ENCODE measurements at regions of chr3 and their contacts with region 1.

Region 1: DNA sequence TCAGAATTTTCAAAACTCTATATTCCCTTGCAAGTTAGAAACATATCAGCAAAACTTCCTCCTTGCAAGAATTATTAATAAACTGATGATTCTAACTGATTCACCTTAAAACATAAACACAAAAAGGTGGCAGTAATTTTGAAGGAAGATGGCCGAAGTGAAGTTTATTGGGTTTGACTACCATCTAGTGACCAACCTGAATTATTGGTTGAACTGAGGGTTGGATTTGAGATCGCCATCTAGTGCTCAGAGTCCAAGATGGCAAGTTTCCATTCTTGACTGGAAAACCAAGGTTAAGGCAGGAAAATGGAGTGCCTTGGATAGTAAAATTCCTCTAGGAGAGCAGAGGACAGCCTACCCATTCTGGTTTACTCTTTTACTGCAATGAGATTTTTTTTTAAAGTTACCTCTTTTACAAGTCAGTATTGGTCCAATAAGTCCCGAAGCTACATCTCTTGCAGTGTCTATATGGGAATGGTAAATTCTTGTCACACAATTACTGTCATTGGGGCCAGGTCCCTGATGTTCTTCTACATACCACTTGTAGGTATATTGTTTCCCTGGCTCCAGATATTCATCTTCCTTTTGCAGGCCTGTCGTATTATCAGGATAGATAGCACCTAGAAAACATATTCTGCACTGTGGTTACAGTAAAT is 51.6 kb upstream of the CP start:
- DNase-seq: peak; percentile 91
- ATAC-seq: peak; percentile 83
- H3K4me3 ChIP-seq: no peak overlapping the region
- H3K27ac ChIP-seq: no peak overlapping the region
- H3K4me1 ChIP-seq: peaks cover 2% of the 10 kb centered on the region; the same call in 1 of the 2 replicates
- H3K27me3 ChIP-seq: no peaks in the 10 kb centered on the region
- CTCF ChIP-seq: peak; percentile 100; the same call in 1 of the 2 replicates
- POLR2A ChIP-seq: peak; percentile 52; the same call in 1 of the 2 replicates
- RAD21 ChIP-seq: peak; percentile 98

Region 2: GRCh38 chr3:148962513-148962912 is 310.7 kb before region 1 on chr3:
- CTCF ChIA-PET with region 1: interaction called, 6 read pairs
- POLR2A ChIA-PET with region 1: no interaction called
- dilution Hi-C with region 1: no loop called
- in situ Hi-C with region 1: loop called (anchors 5 kb)
- intact Hi-C with region 1: loop called (anchors 2 kb)
- DNase-seq: peak; percentile 88
- ATAC-seq: peak; percentile 99
- H3K4me3 ChIP-seq: no peak overlapping the region
- H3K27ac ChIP-seq: no peak overlapping the region
- H3K4me1 ChIP-seq: no peaks in the 10 kb centered on the region
- H3K27me3 ChIP-seq: no peaks in the 10 kb centered on the region
- CTCF ChIP-seq: peak; percentile 54
- POLR2A ChIP-seq: no peak
- RAD21 ChIP-seq: peak; percentile 63

Region 3: DNA sequence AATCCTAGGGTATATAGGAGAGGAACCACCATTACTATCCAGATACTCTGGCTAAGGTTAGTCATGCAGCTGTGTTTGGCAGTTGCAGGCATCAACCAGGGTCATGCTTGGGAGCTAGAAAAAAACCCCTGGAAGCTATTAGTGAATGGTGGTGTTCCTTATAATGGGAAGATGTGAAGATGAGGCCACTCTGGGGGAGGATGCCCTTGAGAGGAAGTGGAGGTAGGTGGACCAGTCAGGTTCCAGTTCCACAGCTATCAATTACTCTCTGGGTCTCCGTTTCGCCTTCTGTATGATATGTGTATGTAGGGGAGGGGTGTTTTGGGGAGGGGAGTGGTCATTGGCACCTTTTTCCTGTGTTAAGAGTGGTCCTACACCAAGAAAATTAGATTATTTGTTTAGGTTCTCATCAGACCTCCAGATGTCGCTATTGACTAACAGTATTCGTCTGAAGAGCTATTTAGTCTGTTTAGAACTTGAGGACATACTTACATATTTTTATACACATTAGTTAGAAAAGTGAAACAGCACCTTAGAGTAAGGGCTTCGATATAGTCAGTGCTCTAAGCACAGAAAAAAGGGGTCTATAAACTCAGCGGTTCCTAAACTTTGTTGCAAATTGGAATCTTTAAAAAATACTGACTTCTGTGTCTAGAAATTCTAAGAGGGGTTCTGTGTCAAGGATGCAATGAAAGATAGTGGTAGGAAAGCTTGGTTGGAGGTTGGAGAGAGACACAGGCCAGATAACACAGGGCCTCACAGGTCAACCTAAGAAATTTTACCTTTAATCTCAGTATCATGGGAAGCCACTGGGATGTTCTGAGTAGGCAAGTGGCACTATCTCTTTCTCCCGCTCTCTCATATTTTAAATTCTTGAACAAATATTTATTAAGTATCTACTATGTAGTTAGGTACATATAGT is 152.9 kb before region 1 on chr3:
- CTCF ChIA-PET with region 1: interaction called, 6 read pairs
- POLR2A ChIA-PET with region 1: no interaction called
- dilution Hi-C with region 1: no loop called
- in situ Hi-C with region 1: loop called (anchors 5 kb)
- intact Hi-C with region 1: loop called (anchors 1 kb)
- DNase-seq: peak; percentile 76
- ATAC-seq: peak; percentile 85
- H3K4me3 ChIP-seq: no peak overlapping the region
- H3K27ac ChIP-seq: no peak overlapping the region
- H3K4me1 ChIP-seq: no peaks in the 10 kb centered on the region
- H3K27me3 ChIP-seq: no peaks in the 10 kb centered on the region
- CTCF ChIP-seq: peak; percentile 79
- POLR2A ChIP-seq: no peak
- RAD21 ChIP-seq: peak; percentile 86

Region 4: DNA sequence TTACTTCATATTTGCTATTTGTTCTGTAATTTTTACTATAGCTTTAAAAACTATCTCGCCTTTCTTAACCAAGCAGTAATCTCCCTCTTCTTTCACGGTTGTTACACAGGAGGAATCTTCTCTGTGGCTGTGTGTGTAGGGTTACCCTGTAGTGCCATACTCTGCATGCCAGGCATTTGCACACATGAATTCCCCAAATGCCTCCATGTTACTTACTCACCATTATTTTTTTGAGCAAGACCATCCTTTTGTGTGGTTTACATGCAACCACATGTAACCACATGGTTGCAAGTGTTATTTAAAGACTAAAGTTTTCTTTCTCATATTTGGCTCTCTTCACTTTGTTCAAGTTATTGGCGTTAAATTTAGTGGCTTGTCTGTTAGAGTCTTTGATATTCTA is 98.3 kb before region 1 on chr3:
- CTCF ChIA-PET with region 1: no interaction called
- POLR2A ChIA-PET with region 1: no interaction called
- dilution Hi-C with region 1: no loop called
- in situ Hi-C with region 1: no loop called
- intact Hi-C with region 1: loop called (anchors 2 kb)
- DNase-seq: no peak
- ATAC-seq: no peak
- H3K4me3 ChIP-seq: no peak overlapping the region
- H3K27ac ChIP-seq: no peak overlapping the region
- H3K4me1 ChIP-seq: peaks cover 11% of the 10 kb centered on the region; the same call in 1 of the 2 replicates
- H3K27me3 ChIP-seq: no peaks in the 10 kb centered on the region
- CTCF ChIP-seq: no peak
- POLR2A ChIP-seq: no peak
- RAD21 ChIP-seq: no peak

Region 5: DNA sequence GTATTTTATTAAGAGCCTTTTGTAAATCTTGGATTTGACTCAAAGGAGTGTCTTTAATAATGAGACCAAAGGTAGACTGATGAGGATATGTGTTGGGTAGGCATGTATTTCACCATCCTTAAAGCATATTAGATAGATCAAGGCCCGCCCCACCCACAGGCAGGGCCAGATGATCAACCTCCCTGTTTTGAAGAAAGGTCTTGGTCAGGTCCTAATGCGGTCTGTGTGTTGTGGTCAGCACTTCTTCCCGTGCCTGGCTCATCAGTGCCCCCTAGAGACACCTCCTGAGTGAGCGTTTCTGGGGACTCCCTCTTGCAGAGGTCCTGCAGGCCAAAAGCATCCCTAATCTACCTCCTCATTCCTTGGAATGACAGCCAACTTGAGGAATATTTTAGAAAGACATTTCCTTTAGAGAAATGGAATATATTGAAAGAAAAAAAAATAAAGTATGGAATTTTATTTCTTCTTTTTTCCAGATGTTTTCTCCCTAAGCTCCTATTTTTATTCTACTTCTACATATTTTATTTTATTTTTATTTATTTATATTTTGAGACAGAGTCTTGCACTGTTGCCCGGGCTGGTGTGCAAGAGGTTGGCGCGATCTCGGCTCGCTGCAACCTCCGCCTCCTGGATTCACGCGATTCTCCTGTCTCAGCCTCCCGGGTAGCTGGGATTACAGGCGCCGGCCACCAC is 207.2 kb after region 1 on chr3:
- CTCF ChIA-PET with region 1: no interaction called
- POLR2A ChIA-PET with region 1: no interaction called
- dilution Hi-C with region 1: no loop called
- in situ Hi-C with region 1: loop called (anchors 5 kb)
- intact Hi-C with region 1: loop called (anchors 1 kb)
- DNase-seq: peak; percentile 91
- ATAC-seq: peak; percentile 97
- H3K4me3 ChIP-seq: no peak overlapping the region
- H3K27ac ChIP-seq: no peak overlapping the region
- H3K4me1 ChIP-seq: peaks cover 8% of the 10 kb centered on the region
- H3K27me3 ChIP-seq: no peaks in the 10 kb centered on the region
- CTCF ChIP-seq: peak; percentile 95
- POLR2A ChIP-seq: 0 out of 2 replicates have a peak, but pooled peaks have one; percentile 41
- RAD21 ChIP-seq: peak; percentile 99

Region 6: GRCh38 chr3:149678365-149678948 is 405.2 kb after region 1 on chr3:
- CTCF ChIA-PET with region 1: no interaction called
- POLR2A ChIA-PET with region 1: no interaction called
- dilution Hi-C with region 1: no loop called
- in situ Hi-C with region 1: no loop called
- intact Hi-C with region 1: no loop called
- DNase-seq: no peak
- ATAC-seq: no peak
- H3K4me3 ChIP-seq: no peak overlapping the region
- H3K27ac ChIP-seq: no peak overlapping the region
- H3K4me1 ChIP-seq: peaks cover 2% of the 10 kb centered on the region; the same call in 1 of the 2 replicates
- H3K27me3 ChIP-seq: no peaks in the 10 kb centered on the region
- CTCF ChIP-seq: no peak
- POLR2A ChIP-seq: no peak
- RAD21 ChIP-seq: no peak

Region 7: DNA sequence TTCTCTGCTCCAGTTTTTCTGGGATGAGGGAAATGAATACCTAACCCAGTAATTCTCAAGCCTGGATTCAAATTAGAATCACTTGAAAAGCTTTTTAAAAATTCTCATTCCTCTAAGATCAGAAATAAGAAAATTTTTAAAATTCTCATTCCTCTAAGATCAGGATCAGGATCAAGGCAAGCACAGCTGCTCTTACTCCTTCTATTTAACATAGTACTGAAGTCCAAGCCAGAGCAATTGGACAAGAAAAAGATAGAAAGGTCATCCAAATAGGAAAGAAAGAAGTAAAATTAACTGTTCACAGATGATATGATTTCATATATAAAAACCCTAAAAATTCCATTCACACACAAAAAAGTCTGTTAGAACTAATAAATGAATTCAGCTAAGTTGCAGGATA is 1723.5 kb after region 1 on chr3:
- CTCF ChIA-PET with region 1: no interaction called
- POLR2A ChIA-PET with region 1: no interaction called
- dilution Hi-C with region 1: no loop called
- in situ Hi-C with region 1: no loop called
- intact Hi-C with region 1: no loop called
- DNase-seq: no peak
- ATAC-seq: no peak
- H3K4me3 ChIP-seq: no peak overlapping the region
- H3K27ac ChIP-seq: no peak overlapping the region
- H3K4me1 ChIP-seq: no peaks in the 10 kb centered on the region
- H3K27me3 ChIP-seq: peaks cover 8% of the 10 kb centered on the region
- CTCF ChIP-seq: no peak
- POLR2A ChIP-seq: no peak
- RAD21 ChIP-seq: no peak